A673 (cell line): ENCODE measurements at regions of chr6 and their contacts with region 1.

Region 1: DNA sequence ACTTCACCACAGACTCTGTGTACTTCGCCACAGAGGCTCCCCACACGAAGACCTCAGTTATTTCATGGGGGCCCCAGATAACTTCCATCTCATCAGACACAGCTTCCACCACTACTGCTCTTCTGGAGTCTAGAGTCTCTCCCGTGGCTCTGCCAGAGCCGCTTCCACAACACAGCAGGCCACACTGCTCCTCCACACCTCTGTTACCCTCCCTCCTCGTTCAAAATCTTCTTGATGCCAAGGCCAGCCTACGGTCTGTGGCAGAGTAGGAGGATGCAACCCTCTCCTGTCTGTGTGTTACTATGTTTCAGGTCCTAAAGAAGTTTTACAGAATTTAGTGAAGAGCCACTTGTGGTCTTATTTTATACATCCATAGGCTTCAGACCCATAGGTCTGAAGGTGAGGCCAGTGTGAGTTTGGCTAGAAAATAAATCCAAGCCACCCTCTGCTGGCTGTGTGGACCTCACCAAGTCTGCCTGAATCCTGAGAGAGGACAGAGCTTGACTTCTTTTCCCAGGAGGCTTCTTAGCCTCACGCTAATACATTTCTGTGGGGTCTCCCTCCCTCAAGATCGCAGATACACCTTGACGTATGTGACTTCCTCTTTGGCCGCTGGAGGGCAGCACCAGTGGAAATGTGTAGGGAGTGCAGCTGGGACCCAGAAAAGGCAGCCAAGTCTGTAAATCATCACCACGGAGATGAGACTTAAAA is 197.7 kb downstream of the FAXC start:
- DNase-seq: peak; percentile 67
- H3K4me3 ChIP-seq: no peak overlapping the region
- H3K27ac ChIP-seq: no peak overlapping the region
- H3K4me1 ChIP-seq: peaks cover 16% of the 10 kb centered on the region
- H3K27me3 ChIP-seq: no peaks in the 10 kb centered on the region
- CTCF ChIP-seq: peak; percentile 86

Region 2: DNA sequence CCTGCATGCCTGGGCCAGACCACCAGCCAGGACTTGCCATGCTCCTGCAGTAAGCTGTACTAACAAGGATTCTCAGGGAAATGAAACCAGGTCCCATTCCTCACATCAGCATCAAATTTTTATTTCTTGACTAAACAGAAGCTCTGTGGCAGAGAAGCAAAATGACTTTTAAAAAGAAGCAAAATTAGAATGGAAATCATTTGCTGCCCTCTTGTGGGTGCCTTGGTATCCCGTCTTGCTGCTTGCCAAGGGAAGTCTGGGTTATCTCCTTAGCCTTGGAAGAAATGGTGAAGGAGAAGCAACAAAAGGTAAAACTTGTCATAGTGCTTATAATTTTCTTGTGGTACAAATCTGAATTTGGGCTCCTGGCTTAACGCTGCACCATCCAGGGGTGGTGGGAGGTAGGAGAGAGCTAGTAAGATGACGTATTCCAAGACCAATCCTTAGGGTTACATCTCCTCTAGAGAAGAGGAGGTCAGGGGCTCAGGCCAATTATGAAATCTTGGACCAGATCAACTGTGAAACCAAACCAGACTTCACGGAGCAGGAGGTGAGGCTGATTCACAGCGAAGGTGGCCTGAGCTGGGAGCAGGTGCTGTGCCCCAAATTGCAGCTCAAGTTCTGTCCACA is 90.2 kb after region 1 on chr6:
- CTCF ChIA-PET with region 1: interaction called, 4 read pairs
- POLR2A ChIA-PET with region 1: no interaction called
- intact Hi-C with region 1: loop called (anchors 1 kb)
- DNase-seq: peak; percentile 53
- H3K4me3 ChIP-seq: no peak overlapping the region
- H3K27ac ChIP-seq: no peak overlapping the region
- H3K4me1 ChIP-seq: no peaks in the 10 kb centered on the region
- H3K27me3 ChIP-seq: no peaks in the 10 kb centered on the region
- CTCF ChIP-seq: peak; percentile 57

Region 3: DNA sequence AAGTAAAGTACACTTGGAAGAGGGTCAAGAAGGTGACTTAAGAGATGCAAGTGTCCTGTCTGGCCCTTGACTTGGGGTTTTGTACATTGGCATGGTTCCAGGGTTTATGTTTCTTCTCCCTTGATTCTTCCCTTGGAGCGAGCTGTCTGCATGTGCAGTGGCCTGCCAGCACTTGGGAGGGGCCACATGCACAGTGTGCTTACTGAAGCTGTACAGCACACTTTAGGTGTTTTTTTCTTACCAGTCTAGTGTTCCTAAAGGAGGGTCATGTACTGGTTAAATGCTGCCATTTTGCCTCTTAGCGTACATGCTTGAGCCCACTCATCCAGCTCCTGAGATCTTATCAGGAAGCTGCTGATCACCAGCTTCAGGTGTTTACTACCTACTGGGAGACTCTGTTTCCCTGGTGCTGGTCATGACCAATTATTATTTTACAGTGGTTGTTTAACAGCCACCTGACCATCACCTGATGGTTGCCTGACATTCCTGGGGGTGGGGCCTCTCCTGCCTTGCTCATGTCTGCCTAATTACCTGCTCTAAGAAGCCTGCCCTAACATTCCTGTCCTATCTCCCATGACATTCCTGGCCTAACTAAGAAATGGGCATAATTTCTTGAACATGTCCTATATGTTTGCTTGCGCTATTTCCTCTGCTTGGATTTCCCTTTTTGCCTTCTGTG is 659.3 kb after region 1 on chr6:
- CTCF ChIA-PET with region 1: no interaction called
- POLR2A ChIA-PET with region 1: no interaction called
- intact Hi-C with region 1: no loop called
- DNase-seq: no peak
- H3K4me3 ChIP-seq: no peak overlapping the region
- H3K27ac ChIP-seq: no peak overlapping the region
- H3K4me1 ChIP-seq: no peaks in the 10 kb centered on the region
- H3K27me3 ChIP-seq: peaks cover 4% of the 10 kb centered on the region
- CTCF ChIP-seq: no peak